H1 (cell line): ENCODE measurements at regions of chr1 and their contacts with region 1.

Region 1: GRCh38 chr1:28505406-28506187 is at the start of gene RCC1:
- DNase-seq: peak; percentile 91 to 92
- H3K4me3 ChIP-seq: peak within 1 kb of the TSS; percentile 75 to 96 (median 90)
- H3K27ac ChIP-seq: peak within 1 kb of the TSS; percentile 95
- H3K4me1 ChIP-seq: peaks cover 5 to 17% (median 9%) of the 10 kb centered on the region in 4 experiments; a peak in 5 of 7 replicates
- H3K27me3 ChIP-seq: no peaks in the 10 kb centered on the region
- CTCF ChIP-seq: 0 out of 4 replicates have a peak, but pooled peaks of 1 of the 3 experiments have one; percentile 3
- EP300 ChIP-seq: no peak
- POLR2A ChIP-seq: peak; percentile 100
- RAD21 ChIP-seq: no peak
- total RNA-seq, gene RCC1: 98.4 and 101 TPM in 2 replicates

Region 2: DNA sequence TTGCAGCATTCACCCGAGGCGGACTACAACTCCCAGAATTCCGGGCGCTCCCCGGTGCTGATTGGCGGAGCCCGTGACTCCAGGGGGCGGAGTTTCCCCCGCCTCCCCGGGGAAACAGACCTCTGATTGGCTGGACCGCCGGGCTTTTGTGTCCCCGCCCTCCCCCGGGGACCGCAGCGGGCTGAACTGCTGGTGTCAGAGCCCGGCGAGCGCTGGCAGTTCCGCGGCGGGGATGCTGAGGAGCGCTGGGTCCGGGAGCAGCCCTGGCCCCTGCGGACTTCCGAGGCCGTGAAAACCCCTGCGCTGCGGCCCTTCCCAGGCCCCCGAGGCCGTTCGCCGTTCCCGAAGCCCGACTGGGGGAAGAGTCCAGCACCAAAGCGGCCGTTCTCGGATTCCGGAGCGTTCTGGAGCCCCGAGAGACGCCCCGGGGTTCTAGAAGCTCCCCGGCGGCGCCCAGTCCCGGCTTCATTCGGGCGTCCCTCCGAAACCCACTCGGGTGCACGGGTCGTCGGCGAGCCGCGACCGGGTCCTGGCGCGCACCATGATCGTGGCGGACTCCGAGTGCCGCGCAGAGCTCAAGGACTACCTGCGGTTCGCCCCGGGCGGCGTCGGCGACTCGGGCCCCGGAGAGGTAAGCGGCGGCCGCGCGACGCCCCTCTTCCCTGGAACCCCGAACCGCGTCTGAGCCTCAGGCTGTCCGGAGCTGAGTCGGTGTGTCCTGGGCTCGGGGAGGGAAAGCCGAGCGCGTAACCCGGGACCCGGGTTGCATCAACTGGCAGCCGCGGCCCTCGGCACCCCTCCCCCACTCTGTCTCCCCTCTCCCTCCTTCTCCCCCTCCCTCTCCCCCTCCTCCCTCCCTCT is 246.1 kb before region 1 on chr1 and contains the start of gene SESN2:
- CTCF ChIA-PET with region 1: no interaction called
- POLR2A ChIA-PET with region 1: interaction called, 14 read pairs
- DNase-seq: peak; percentile 94 to 99
- H3K4me3 ChIP-seq: peak within 1 kb of the TSS; percentile 73 to 97 (median 88)
- H3K27ac ChIP-seq: peak within 1 kb of the TSS; percentile 67; the same call in 1 of the 2 replicates
- H3K4me1 ChIP-seq: peaks cover 3 to 17% (median 11%) of the 10 kb centered on the region in 4 experiments; a peak in 5 of 7 replicates
- H3K27me3 ChIP-seq: no peaks in the 10 kb centered on the region
- CTCF ChIP-seq: no peak
- EP300 ChIP-seq: no peak
- POLR2A ChIP-seq: peak; percentile 79 to 95
- RAD21 ChIP-seq: no peak
- total RNA-seq, gene SESN2: 22.6 and 25.1 TPM in 2 replicates

Region 3: GRCh38 chr1:28412731-28413130 is 92.9 kb before region 1 on chr1:
- CTCF ChIA-PET with region 1: interaction called, 4 read pairs
- POLR2A ChIA-PET with region 1: interaction called, 139 read pairs
- DNase-seq: no peak
- H3K4me3 ChIP-seq: no peak overlapping the region
- H3K27ac ChIP-seq: no peak overlapping the region
- H3K4me1 ChIP-seq: peaks cover 1 to 8% (median 3%) of the 10 kb centered on the region in 4 experiments; a peak in 5 of 7 replicates
- H3K27me3 ChIP-seq: no peaks in the 10 kb centered on the region
- CTCF ChIP-seq: 0 out of 4 replicates have a peak, but pooled peaks of 1 of the 3 experiments have one; percentile 9
- EP300 ChIP-seq: no peak
- POLR2A ChIP-seq: no peak
- RAD21 ChIP-seq: no peak; a peak in 1 of 4 replicates

Region 4: GRCh38 chr1:28480308-28480707 is 25.3 kb before region 1 on chr1:
- CTCF ChIA-PET with region 1: no interaction called
- POLR2A ChIA-PET with region 1: interaction called, 16 read pairs
- DNase-seq: no peak
- H3K4me3 ChIP-seq: no peak overlapping the region
- H3K27ac ChIP-seq: no peak overlapping the region
- H3K4me1 ChIP-seq: no peaks in the 10 kb centered on the region
- H3K27me3 ChIP-seq: no peaks in the 10 kb centered on the region
- CTCF ChIP-seq: no peak
- EP300 ChIP-seq: no peak
- POLR2A ChIP-seq: no peak
- RAD21 ChIP-seq: no peak

Region 5: DNA sequence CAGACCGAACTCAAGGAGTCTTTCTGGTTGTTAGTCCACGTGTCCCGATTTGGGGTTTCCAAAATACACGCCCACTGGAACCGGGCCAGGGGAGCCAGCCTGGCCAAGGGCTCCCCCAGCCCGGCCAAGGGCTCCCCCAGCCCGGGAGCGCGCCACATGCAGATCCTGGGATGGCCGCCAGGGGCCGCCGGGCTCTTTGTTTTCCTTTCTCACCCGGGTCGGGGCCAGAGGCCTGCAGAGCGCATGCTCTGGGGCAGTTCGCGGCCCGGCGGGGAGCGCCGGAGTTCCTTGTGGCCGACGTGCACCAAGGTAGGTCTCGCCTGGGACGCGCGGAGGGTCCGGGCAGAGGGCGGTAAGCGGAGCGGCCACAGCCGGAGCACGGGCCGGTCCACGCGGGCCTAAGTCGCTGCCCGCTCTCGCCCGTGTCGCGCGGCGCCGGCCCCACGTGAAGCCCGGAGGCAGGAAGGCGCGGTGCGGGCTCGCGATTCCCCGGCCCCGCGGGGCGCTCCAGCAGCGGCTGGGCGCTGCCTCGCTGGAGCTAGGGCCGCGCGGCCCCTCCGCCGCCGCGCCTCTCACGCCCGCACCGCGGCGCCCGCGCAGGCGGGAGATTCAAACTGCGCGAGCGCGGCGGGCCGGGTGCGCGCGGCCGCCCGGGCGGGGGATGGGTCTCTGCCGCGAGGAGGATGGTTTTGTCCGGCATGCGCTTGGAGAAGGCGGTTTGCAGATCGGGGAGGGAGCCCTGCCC is 12.6 kb after region 1 on chr1:
- CTCF ChIA-PET with region 1: interaction called, 3 read pairs
- POLR2A ChIA-PET with region 1: interaction called, 291 read pairs
- DNase-seq: peak in 1 of 2 experiments; percentile 98
- H3K4me3 ChIP-seq: peak overlapping the region; percentile 66 to 83 (median 78)
- H3K27ac ChIP-seq: peak overlapping the region; percentile 95
- H3K4me1 ChIP-seq: peaks cover 7 to 16% (median 11%) of the 10 kb centered on the region in 4 experiments
- H3K27me3 ChIP-seq: no peaks in the 10 kb centered on the region
- CTCF ChIP-seq: peak; percentile 73 to 91 (median 88)
- EP300 ChIP-seq: peak in 1 of 2 experiments; percentile 43; a peak in 1 of 3 replicates
- POLR2A ChIP-seq: peak; percentile 82 to 84; a peak in 2 of 3 replicates
- RAD21 ChIP-seq: peak; percentile 75 to 87

Region 6: GRCh38 chr1:28703629-28704028 is 198.0 kb after region 1 on chr1:
- CTCF ChIA-PET with region 1: no interaction called
- POLR2A ChIA-PET with region 1: no interaction called
- DNase-seq: no peak
- H3K4me3 ChIP-seq: no peak overlapping the region
- H3K27ac ChIP-seq: no peak overlapping the region
- H3K4me1 ChIP-seq: no peaks in the 10 kb centered on the region
- H3K27me3 ChIP-seq: no peaks in the 10 kb centered on the region
- CTCF ChIP-seq: no peak
- EP300 ChIP-seq: no peak
- POLR2A ChIP-seq: no peak
- RAD21 ChIP-seq: no peak